HEK293 (cell line): ENCODE measurements at regions of chr12 and their contacts with region 1.

Region 1: GRCh38 chr12:15220994-15221885 is at the start of gene RERG:
- H3K4me3 ChIP-seq: peak within 1 kb of the TSS; percentile 44
- H3K27ac ChIP-seq: peak within 1 kb of the TSS; percentile 28; the same call in 1 of the 2 replicates
- H3K4me1 ChIP-seq: peaks cover 4% of the 10 kb centered on the region; the same call in 1 of the 2 replicates
- CTCF ChIP-seq: peak; percentile 98

Region 2: DNA sequence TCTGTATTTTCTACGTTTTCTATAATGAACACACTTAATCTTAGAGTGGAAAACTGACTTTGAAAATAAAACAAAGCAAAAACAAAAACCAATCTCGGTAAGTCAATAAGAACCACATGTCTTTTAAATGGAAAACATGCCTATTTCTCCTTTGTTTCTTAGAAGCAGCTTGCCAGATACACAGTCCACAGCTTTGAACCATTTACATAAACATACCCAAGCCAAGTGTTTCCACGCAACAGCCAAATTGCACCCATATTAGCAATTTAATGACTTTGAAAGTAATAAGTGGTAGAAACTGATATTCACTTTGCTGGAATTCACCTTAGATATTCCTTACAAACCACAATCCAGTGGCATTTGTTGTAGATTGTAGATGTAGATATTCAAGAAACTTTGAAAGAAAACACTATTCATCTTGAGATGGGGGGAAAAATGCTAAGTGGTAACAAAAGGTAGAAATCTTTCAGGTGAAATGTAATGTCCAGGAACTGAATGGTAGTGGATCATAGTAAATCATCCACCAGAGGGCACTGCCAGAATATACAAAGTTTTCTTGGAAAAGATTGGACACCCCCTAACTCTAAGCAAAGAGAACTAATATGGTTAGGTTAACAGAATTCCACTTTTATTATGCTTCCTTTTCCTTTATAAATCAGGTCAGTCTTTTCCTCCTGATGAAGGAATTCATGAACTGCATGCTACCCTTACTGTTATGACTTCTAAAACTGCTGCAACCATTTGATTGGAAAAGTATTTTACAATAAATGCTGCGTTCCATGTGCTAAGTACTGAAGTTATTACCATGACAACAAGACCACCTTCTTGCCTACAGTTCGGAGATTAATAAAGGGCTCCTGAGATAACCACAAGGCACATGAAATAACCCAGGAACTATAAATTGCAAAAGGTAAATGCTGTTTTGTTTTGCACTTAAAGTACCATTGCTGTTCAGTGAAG is 69.8 kb before region 1 on chr12:
- CTCF ChIA-PET with region 1: interaction called, 101 read pairs
- POLR2A ChIA-PET with region 1: no interaction called
- H3K4me3 ChIP-seq: no peak overlapping the region
- H3K27ac ChIP-seq: no peak overlapping the region
- H3K4me1 ChIP-seq: peaks cover 5% of the 10 kb centered on the region; the same call in 1 of the 2 replicates
- CTCF ChIP-seq: no peak

Region 3: GRCh38 chr12:15172060-15172822 is 49.0 kb before region 1 on chr12:
- CTCF ChIA-PET with region 1: interaction called, 10 read pairs
- POLR2A ChIA-PET with region 1: interaction called, 3 read pairs
- H3K4me3 ChIP-seq: no peak overlapping the region
- H3K27ac ChIP-seq: no peak overlapping the region
- H3K4me1 ChIP-seq: peaks cover 2% of the 10 kb centered on the region; the same call in 1 of the 2 replicates
- CTCF ChIP-seq: no peak

Region 4: GRCh38 chr12:15183813-15184212 is 37.4 kb before region 1 on chr12:
- CTCF ChIA-PET with region 1: interaction called, 11 read pairs
- POLR2A ChIA-PET with region 1: no interaction called
- H3K4me3 ChIP-seq: no peak overlapping the region
- H3K27ac ChIP-seq: no peak overlapping the region
- H3K4me1 ChIP-seq: no peaks in the 10 kb centered on the region
- CTCF ChIP-seq: no peak

Region 5: GRCh38 chr12:15205341-15206010 is 15.8 kb before region 1 on chr12:
- CTCF ChIA-PET with region 1: interaction called, 13 read pairs
- POLR2A ChIA-PET with region 1: no interaction called
- H3K4me3 ChIP-seq: no peak overlapping the region
- H3K27ac ChIP-seq: no peak overlapping the region
- H3K4me1 ChIP-seq: peaks cover 9% of the 10 kb centered on the region
- CTCF ChIP-seq: no peak

Region 6: GRCh38 chr12:15276088-15276698 is 55.0 kb after region 1 on chr12:
- CTCF ChIA-PET with region 1: interaction called, 11 read pairs
- POLR2A ChIA-PET with region 1: no interaction called
- H3K4me3 ChIP-seq: no peak overlapping the region
- H3K27ac ChIP-seq: no peak overlapping the region
- H3K4me1 ChIP-seq: no peaks in the 10 kb centered on the region
- CTCF ChIP-seq: 0 out of 2 replicates have a peak, but pooled peaks have one; percentile 24